PC-9 (cell line): ENCODE measurements at regions of chr3 and their contacts with region 1.

Region 1: DNA sequence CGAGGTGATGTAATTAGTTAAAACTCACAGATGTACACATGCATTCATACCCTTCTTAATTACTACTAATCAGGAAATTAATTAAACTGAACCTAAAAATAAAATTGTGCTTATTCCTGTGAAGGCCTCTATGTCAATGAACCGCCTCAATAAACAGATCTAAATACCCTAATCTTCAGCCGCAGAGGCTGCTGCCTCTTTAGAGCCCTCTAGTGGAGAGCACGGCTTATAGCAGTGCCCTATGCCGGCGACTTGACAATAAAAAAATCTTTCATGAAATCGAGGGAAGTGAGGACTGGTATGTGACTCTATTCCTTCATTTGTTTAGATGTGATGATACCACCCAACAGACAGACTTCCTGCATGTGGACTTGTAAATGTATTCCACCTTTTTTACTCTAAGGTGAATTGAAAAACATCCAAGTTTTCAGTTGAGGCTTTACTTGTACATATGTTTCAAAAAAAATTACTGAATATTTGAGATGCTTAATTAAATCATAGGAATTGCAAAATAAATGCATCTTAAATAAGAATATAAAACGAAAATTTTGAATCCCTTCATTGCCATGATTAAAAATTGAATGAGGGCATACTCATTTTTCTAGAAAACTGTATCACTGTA is 8.3 kb upstream of the EPHA3 start:
- DNase-seq: peak; percentile 35 to 40
- H3K4me3 ChIP-seq: no peak overlapping the region
- H3K27ac ChIP-seq: no peak overlapping the region
- H3K4me1 ChIP-seq: no peaks in the 10 kb centered on the region
- H3K27me3 ChIP-seq: no peaks in the 10 kb centered on the region
- CTCF ChIP-seq: peak; percentile 90

Region 2: DNA sequence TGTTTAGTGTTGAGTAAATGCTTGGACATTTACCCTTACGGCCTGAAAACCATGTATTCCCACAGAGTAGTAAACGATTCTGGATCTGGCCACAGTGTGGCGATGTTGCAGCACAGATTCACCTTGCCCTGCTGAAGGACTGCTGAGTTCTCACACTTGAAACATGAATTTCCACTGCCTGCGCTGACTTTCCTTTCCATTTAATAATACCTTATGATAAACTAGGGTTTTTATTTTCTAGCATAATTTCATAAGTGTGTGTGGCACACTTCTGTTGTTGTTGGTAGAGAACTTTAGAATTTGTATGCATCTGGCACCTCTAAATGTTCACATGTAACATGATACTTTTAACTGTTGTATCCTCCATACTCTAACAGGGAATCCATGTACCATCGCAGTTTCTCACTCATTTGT is 895.4 kb before region 1 on chr3:
- CTCF ChIA-PET with region 1: no interaction called
- POLR2A ChIA-PET with region 1: no interaction called
- intact Hi-C with region 1: loop called (anchors 5 kb)
- DNase-seq: peak in 1 of 2 experiments; percentile 59
- H3K4me3 ChIP-seq: no peak overlapping the region
- H3K27ac ChIP-seq: no peak overlapping the region
- H3K4me1 ChIP-seq: no peaks in the 10 kb centered on the region
- H3K27me3 ChIP-seq: no peaks in the 10 kb centered on the region
- CTCF ChIP-seq: peak; percentile 84

Region 3: DNA sequence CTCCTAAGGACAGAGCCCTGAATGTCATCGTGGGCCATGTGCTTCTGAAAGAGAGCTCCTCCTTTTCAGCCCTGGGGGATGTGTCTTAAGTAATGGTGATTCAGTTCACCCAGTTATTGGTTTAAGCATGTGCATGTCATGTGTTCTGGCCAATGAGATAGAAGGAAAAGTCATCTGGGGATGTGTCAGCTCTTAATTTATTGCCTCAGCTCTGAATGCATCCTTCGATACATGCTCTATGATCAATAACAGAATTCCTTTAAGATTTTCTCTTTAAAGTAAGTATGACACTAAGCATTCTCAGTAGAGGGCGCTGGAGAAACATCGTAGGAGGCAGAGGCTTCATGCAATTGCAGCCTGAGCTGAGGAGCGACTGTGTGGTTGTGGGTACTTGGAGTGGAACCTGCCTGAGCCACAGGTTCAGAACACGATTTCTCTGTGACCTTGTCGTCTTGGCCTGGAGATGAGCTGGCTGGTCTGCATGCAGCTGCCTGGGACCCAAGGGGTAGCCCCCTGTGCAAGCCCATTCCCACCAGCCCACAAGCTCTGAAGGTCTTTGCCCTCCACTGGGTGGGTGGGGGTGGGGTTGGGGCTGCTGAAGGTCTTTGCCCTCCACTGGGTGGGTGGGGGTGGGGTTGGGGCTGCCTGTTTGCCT is 879.8 kb before region 1 on chr3:
- CTCF ChIA-PET with region 1: no interaction called
- POLR2A ChIA-PET with region 1: no interaction called
- intact Hi-C with region 1: loop called (anchors 5 kb)
- DNase-seq: peak in 1 of 2 experiments; percentile 15
- H3K4me3 ChIP-seq: no peak overlapping the region
- H3K27ac ChIP-seq: no peak overlapping the region
- H3K4me1 ChIP-seq: no peaks in the 10 kb centered on the region
- H3K27me3 ChIP-seq: no peaks in the 10 kb centered on the region
- CTCF ChIP-seq: peak; percentile 61

Region 4: GRCh38 chr3:89145995-89146394 is 46.9 kb after region 1 on chr3:
- CTCF ChIA-PET with region 1: no interaction called
- POLR2A ChIA-PET with region 1: no interaction called
- intact Hi-C with region 1: no loop called
- DNase-seq: no peak
- H3K4me3 ChIP-seq: no peak overlapping the region
- H3K27ac ChIP-seq: no peak overlapping the region
- H3K4me1 ChIP-seq: no peaks in the 10 kb centered on the region
- H3K27me3 ChIP-seq: no peaks in the 10 kb centered on the region
- CTCF ChIP-seq: no peak